GM10248 (cell line): ENCODE measurements at regions of chr6 and their contacts with region 1.

Region 1: DNA sequence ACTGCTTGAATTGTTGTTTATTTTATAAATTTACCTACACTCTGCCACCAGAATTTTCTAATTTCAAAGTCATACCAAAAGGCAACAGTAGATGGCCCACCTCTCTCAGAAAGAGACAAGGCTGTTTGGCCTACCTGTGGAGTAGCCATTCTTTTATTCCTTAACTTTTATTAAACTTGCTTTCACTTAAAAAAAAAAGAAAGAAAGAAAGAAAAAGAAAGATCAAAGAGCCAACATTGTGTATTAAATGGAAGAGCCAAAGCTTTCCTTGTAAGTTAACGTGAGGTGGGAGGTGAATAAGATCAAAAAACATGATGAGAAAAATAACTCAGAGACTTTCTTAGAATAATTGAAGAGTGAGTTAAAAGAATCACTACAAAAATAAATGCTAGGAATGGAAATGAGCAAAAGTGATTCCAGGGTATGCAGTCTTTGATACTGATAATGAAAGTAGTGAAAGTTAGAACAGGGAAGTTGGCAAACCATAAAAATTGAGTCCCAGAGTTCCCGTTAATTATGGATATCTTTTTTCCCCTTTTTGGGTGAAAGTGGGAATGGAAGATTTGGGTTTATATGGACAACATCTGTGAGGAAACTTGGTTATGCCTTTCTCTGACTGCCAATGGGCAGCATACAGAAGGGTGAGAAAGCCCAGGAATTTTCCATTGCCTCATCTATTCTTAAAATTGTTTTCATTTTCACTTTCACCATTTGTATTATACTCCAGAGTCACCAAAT is 35.9 kb upstream of the MYB start:
- DNase-seq: no peak
- CTCF ChIP-seq: peak; percentile 56

Region 2: DNA sequence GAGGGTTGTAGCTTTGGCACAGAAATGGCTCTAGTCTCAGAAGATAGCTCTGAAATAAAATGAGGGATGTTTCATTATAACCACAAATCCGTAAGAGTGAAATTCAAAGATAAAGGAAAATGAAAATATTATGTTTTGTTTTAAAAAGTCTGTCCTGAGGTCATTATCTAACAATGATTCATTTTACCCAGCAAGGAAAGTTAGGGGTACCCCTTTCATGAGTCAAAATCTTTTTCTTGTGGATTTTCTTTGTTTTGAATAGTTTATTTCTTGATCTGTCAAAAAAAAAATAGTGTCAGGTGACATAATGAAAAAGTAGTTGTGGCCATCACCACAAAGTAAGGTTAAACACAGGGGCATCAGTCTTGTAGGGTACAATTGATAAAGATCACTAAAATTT is 23.8 kb before region 1 on chr6:
- CTCF ChIA-PET with region 1: interaction called, 13 read pairs
- POLR2A ChIA-PET with region 1: no interaction called
- DNase-seq: no peak
- CTCF ChIP-seq: no peak

Region 3: GRCh38 chr6:135128268-135128914 is 16.8 kb before region 1 on chr6:
- CTCF ChIA-PET with region 1: interaction called, 32 read pairs
- POLR2A ChIA-PET with region 1: no interaction called
- DNase-seq: peak; percentile 66
- CTCF ChIP-seq: no peak

Region 4: DNA sequence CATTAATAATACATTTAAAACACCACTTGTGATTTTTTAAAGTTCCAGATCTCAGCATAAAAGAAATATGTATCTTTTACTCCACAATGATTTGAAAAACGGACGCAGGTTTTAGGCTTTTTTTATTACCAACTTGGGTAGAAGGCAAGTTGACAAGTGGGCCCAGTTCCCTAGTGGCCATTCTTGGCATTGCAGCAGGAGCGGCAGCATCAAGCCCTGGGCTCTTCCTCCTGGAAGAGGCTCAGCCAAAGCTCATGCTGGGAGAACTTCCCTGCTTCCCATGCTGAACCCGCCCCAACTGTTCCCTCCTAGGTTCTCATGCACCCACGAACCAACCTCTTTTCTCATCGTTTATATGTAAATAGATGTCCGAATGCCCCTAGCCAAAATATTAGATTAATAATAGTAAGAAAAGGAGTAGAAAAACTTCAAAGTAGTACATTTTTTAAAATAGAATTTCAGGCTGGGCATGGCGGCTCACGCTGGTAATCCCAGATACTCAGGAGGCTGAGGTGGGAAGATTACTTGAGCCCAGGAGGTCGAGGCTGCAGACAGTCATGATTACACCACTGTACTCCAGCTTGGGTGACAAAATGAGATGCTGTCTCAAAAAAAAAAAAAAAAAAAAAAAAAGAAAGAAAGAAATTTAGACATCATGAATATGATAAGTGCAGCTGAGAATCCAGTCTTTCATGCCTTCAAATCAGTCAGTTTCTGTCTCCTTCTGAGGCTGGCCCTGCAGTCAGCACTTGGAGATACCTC is 17.6 kb after region 1 on chr6:
- CTCF ChIA-PET with region 1: interaction called, 135 read pairs
- POLR2A ChIA-PET with region 1: no interaction called
- DNase-seq: no peak
- CTCF ChIP-seq: peak; percentile 71

Region 5: GRCh38 chr6:135183532-135184440 is 38.6 kb after region 1 on chr6:
- CTCF ChIA-PET with region 1: interaction called, 41 read pairs
- POLR2A ChIA-PET with region 1: no interaction called
- DNase-seq: peak; percentile 64
- CTCF ChIP-seq: peak; percentile 78

Region 6: GRCh38 chr6:135212935-135213334 is 67.7 kb after region 1 on chr6:
- CTCF ChIA-PET with region 1: no interaction called
- POLR2A ChIA-PET with region 1: no interaction called
- DNase-seq: no peak
- CTCF ChIP-seq: no peak

Region 7: GRCh38 chr6:135280375-135281136 is 135.3 kb after region 1 on chr6:
- CTCF ChIA-PET with region 1: no interaction called
- POLR2A ChIA-PET with region 1: no interaction called
- DNase-seq: no peak
- CTCF ChIP-seq: no peak

Region 8: DNA sequence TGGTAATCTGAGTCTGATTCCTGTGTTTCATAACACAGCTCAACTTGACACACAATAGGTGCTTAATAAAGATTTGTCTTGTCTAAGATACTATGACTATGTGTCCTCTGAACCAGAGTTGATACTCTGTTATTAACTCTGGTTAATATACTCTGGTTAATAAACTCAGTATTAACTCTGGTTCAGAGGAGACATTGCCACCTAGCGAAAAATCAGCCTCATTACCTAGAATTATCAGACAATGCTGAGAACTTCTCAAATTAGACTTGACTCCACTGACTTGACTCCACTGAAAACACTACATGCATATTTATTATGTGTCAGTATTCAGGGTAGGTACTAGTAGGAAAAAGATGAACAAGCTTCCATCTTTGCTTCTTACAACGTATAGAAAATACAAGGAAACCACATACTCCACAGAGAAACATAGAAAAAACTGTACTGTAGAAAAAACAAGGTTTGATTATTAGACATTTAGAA is 278.5 kb after region 1 on chr6:
- CTCF ChIA-PET with region 1: interaction called, 17 read pairs
- POLR2A ChIA-PET with region 1: no interaction called
- DNase-seq: peak; percentile 40
- CTCF ChIP-seq: peak; percentile 59